Dorsolateral prefrontal cortex (tissue), 120 donors: ENCODE measurements at regions of chr11 and their contacts with region 1.

Region 1: DNA sequence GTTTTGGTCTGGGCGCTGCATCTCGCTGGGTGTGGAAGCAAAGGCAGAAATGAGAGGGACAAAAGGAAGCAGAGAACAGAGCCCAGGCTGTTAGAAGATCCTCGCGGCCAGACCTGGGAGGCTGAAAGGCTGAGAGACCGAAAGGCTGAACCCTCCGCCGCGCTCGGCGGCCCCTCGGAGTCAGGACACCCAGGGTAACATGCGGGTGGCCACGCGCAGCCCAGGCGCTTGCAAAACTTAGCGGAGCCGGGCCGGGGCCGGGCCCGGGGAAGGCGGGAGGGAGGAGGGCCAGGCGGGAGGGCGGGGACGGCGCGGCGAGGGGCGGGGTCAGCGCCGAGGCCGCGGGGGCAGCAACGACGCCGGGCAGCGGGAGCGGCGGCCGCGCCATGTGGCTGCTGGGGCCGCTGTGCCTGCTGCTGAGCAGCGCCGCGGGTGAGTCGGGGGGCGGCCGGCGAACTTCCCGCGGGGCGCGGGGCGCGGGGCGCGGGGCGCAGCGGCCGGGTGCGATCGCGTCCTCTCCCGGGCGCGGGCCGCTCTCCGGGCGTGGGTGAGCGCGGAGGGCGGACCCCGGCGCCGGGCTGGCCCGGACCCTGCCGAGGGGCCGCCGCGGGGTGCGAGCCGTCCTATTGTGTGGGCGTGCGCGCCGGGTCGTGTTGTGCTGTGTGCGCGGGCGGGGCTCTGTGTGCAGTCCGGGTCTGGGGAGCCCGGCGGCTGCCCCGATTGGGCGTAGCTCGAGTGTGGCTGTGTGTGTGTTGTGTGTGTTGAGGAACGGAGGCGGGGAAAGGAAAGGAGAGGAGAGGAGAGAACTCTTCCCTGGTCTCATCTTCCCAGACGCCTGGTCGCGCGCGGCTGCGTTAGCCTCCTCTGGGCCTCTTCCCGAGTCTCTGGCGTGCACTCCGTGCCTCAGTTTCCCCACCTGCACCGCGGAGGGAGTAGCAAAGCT is at the start of gene LDLRAD3:
- DNase-seq: peak; percentile 46 to 77 (median 56)
- H3K4me3 ChIP-seq: peak within 1 kb of the TSS; percentile 51 to 88 (median 67)
- H3K27ac ChIP-seq: peak within 1 kb of the TSS in 56 of 59 donors; percentile 5 to 89 (median 75)
- H3K27me3 ChIP-seq: no peaks in the 10 kb centered on the region
- CTCF ChIP-seq: no peak
- total RNA-seq, gene LDLRAD3: 8.6 to 50.7 (median 16.4) TPM

Region 2: DNA sequence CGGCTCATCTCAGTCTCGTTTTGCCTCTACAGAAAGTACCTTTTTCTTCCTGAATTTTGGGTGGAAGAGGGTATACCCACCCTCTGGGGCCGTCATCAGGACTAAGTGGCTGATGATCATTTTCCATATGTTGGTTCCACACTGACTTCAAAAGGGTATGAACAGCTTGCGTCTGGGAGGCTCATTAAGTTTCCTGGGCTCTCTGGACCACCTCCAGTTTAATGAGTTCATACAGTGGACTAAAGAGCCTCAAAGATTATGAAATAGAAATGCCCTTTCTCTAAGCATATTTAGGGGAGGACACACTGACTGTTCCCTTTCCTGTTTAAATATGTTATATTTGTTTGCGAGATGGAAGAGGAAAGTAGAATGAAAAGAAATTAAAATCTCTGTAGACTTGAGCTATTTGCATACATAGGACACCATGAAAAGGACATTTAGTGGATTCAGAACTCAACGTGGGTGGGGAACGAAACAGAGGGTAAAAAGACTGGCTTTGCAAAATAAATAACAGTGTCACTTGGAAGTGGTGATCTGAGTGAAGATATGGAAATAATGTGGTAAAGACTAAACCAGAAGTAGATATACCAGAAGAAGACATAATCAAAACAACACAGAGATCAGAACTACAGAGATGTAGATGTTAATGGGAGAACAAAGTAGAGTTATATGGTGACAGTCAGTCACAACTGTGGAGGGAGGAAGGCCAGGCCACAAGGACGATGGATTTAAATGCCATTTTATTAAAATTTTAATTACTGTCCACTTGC is 18.6 kb after region 1 on chr11:
- intact Hi-C with region 1: no loop called
- DNase-seq: no peak
- H3K4me3 ChIP-seq: no peak overlapping the region
- H3K27ac ChIP-seq: no peak overlapping the region
- H3K27me3 ChIP-seq: no peaks in the 10 kb centered on the region
- CTCF ChIP-seq: no peak

Region 3: GRCh38 chr11:36010010-36010740 is 66.2 kb after region 1 on chr11:
- intact Hi-C with region 1: loop called (anchors 10 kb)
- DNase-seq: peak in 1 of 10 donors; percentile 74
- H3K4me3 ChIP-seq: no peak overlapping the region
- H3K27ac ChIP-seq: peak overlapping the region in 55 of 59 donors; percentile 3 to 94 (median 74)
- H3K27me3 ChIP-seq: no peaks in the 10 kb centered on the region
- CTCF ChIP-seq: no peak